Activated CD4-positive, alpha-beta memory T cell treated with anti-CD3 and anti-CD28 coated beads for 36 hours (primary cell): ENCODE measurements at regions of chr5 and their contacts with region 1.

Region 1: GRCh38 chr5:40834849-40835787 is at the start of gene RPL37:
- DNase-seq: peak; percentile 96
- H3K4me3 Mint-ChIP-seq: peak within 1 kb of the TSS; percentile 100
- H3K27ac Mint-ChIP-seq: peak within 1 kb of the TSS; percentile 100
- H3K4me1 Mint-ChIP-seq: peaks cover 56% of the 10 kb centered on the region
- H3K27me3 Mint-ChIP-seq: no peaks in the 10 kb centered on the region
- total RNA-seq, gene RPL37: 1,815 to 1,873 TPM

Region 2: DNA sequence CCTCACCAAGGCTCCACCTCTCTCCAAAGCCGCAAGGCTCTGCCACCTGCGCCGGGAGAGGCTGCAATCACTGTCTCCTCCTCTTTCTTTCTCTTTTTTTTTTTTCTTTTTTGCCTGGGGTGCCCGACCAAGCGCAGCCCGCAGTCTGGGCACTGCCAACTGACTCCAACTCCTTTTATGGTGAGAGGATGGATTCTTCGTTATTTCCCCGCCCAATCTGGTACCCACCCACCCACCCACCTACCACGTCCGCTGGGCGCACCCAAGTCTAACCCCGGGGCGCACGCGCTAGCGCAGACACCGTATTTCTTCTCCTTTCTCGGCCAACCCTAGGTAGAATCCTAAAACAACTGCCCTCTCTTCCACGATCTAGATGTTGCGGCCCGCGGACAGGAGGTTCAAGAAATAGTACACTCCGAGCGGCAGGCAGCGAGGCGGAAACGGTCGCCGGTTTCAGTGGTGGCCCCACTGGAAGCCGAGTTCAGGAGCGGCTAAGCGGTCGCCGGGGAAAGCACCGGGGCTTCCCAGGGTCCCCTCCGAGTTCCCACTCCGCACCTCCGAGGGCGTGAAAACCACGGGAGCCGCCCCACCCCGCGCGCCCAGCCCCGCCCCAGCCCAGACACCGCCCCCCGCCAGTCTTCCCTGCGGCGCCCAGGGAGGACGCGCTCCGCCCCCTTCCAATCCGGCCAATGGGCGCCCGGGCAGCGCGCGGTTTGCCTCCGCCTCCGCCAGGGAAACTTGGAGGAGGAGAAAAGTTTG is 155.8 kb before region 1 on chr5:
- CTCF ChIA-PET with region 1: no interaction called
- POLR2A ChIA-PET with region 1: interaction called, 12 read pairs
- intact Hi-C with region 1: loop called (anchors 1 kb)
- DNase-seq: peak; percentile 96
- H3K4me3 Mint-ChIP-seq: peak overlapping the region; percentile 93
- H3K27ac Mint-ChIP-seq: peak overlapping the region; percentile 97
- H3K4me1 Mint-ChIP-seq: peaks cover 37% of the 10 kb centered on the region
- H3K27me3 Mint-ChIP-seq: no peaks in the 10 kb centered on the region

Region 3: GRCh38 chr5:40798012-40798855 is 36.9 kb before region 1 on chr5 and contains the start of gene PRKAA1:
- CTCF ChIA-PET with region 1: no interaction called
- POLR2A ChIA-PET with region 1: interaction called, 9 read pairs
- intact Hi-C with region 1: loop called (anchors 1 kb)
- DNase-seq: peak; percentile 90
- H3K4me3 Mint-ChIP-seq: peak within 1 kb of the TSS; percentile 87
- H3K27ac Mint-ChIP-seq: peak within 1 kb of the TSS; percentile 89
- H3K4me1 Mint-ChIP-seq: peaks cover 43% of the 10 kb centered on the region
- H3K27me3 Mint-ChIP-seq: peaks cover 1% of the 10 kb centered on the region
- total RNA-seq, gene PRKAA1: 54.4 to 55.6 TPM

Region 4: GRCh38 chr5:41156739-41157138 is 321.6 kb after region 1 on chr5:
- CTCF ChIA-PET with region 1: no interaction called
- POLR2A ChIA-PET with region 1: no interaction called
- intact Hi-C with region 1: no loop called
- DNase-seq: no peak
- H3K4me3 Mint-ChIP-seq: no peak overlapping the region
- H3K27ac Mint-ChIP-seq: no peak overlapping the region
- H3K4me1 Mint-ChIP-seq: no peaks in the 10 kb centered on the region
- H3K27me3 Mint-ChIP-seq: no peaks in the 10 kb centered on the region

Region 5: GRCh38 chr5:41748631-41749030 is 913.5 kb after region 1 on chr5:
- CTCF ChIA-PET with region 1: no interaction called
- POLR2A ChIA-PET with region 1: no interaction called
- intact Hi-C with region 1: loop called (anchors 1 kb)
- DNase-seq: peak; percentile 59
- H3K4me3 Mint-ChIP-seq: no peak overlapping the region
- H3K27ac Mint-ChIP-seq: peak overlapping the region; percentile 57
- H3K4me1 Mint-ChIP-seq: peaks cover 32% of the 10 kb centered on the region
- H3K27me3 Mint-ChIP-seq: no peaks in the 10 kb centered on the region

Region 6: DNA sequence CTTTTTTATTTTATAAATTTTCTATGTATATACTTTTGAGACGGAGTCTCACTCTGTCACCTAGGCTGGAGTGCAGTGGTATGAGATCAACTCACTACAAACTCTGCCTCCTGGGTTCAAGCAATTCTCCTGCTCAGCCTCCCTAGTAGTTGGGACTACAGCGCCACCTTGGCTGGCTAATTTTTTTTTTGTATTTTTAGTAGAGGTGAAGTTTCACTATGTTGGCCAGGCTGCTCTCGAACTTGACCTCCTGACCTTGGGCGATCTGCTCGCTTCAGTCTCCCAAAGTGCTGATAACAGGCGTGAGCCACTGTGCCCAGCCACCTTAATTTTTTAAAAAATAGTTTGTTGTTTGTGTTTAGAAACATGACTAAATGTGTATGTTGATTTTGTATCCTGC is 1166.6 kb after region 1 on chr5:
- CTCF ChIA-PET with region 1: no interaction called
- POLR2A ChIA-PET with region 1: no interaction called
- intact Hi-C with region 1: no loop called
- DNase-seq: no peak
- H3K4me3 Mint-ChIP-seq: no peak overlapping the region
- H3K27ac Mint-ChIP-seq: no peak overlapping the region
- H3K4me1 Mint-ChIP-seq: no peaks in the 10 kb centered on the region
- H3K27me3 Mint-ChIP-seq: peaks cover 3% of the 10 kb centered on the region